Activated CD4-positive, alpha-beta T cell treated with anti-CD3 and anti-CD28 coated beads for 36 hours (primary cell): ENCODE measurements at regions of chr6 and their contacts with region 1.

Region 1: DNA sequence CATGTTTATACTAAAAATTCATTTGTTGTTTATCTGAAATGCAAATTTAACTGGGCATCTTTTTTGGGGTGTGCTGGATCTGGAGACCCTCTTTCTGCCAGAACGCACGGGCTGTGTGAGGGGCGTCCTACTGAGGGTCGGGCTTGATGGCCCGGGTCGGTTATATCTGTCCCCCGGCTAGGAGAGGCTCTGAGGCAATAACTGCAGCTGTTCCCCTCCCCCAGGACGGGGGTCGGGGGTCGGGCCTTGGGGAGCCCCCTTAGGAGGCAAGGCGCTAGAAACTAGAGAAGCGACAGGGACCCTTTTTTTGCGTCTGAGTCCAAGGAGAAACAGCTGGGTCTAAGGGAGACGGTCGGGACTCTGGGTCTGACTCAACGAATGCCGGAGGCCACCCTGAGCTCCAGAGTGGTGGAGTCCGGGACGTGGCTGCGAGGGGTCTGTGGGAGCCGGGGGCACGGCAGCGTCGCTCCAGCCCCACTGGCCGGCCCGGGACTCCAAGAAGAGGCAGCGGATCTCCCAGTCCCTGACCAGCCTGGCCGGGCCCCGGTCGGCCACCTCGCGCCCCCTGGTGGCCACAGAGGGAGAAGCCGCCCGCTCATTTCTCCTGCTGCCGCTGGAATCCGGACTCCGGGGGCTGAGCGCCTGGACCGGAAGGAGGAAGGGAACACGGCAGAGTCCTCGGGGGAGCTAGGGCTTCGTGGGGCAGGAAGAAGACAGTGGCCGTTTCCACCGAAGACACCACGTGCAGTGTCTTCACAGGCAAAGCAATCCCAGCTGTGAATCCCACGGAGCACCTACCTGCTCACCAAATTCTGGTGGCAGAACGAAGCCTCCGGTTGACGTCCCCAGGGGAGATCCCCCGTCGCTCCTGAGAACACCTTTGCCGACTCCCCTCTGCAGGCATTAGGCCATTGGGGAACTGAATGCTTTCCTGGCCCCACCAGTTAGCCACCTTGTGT is 24.0 kb upstream of the SCML4 start:
- DNase-seq: peak; percentile 88
- ATAC-seq: peak; percentile 91
- H3K4me3 Mint-ChIP-seq: peak overlapping the region; percentile 71
- H3K27ac Mint-ChIP-seq: peak overlapping the region; percentile 70
- H3K4me1 Mint-ChIP-seq: peaks cover 21% of the 10 kb centered on the region
- H3K27me3 Mint-ChIP-seq: no peaks in the 10 kb centered on the region

Region 2: GRCh38 chr6:107674995-107675738 is 173.0 kb before region 1 on chr6:
- CTCF ChIA-PET with region 1: interaction called, 54 read pairs
- POLR2A ChIA-PET with region 1: no interaction called
- intact Hi-C with region 1: loop called (anchors 1 kb)
- DNase-seq: peak; percentile 95
- ATAC-seq: peak; percentile 98
- H3K4me3 Mint-ChIP-seq: peak overlapping the region; percentile 33
- H3K27ac Mint-ChIP-seq: peak overlapping the region; percentile 81
- H3K4me1 Mint-ChIP-seq: peaks cover 10% of the 10 kb centered on the region
- H3K27me3 Mint-ChIP-seq: no peaks in the 10 kb centered on the region

Region 3: GRCh38 chr6:107731422-107732319 is 116.5 kb before region 1 on chr6:
- CTCF ChIA-PET with region 1: interaction called, 42 read pairs
- POLR2A ChIA-PET with region 1: no interaction called
- intact Hi-C with region 1: loop called (anchors 1 kb)
- DNase-seq: peak; percentile 46
- ATAC-seq: peak; percentile 20
- H3K4me3 Mint-ChIP-seq: peak overlapping the region; percentile 79
- H3K27ac Mint-ChIP-seq: peak overlapping the region; percentile 91
- H3K4me1 Mint-ChIP-seq: peaks cover 82% of the 10 kb centered on the region
- H3K27me3 Mint-ChIP-seq: no peaks in the 10 kb centered on the region

Region 4: DNA sequence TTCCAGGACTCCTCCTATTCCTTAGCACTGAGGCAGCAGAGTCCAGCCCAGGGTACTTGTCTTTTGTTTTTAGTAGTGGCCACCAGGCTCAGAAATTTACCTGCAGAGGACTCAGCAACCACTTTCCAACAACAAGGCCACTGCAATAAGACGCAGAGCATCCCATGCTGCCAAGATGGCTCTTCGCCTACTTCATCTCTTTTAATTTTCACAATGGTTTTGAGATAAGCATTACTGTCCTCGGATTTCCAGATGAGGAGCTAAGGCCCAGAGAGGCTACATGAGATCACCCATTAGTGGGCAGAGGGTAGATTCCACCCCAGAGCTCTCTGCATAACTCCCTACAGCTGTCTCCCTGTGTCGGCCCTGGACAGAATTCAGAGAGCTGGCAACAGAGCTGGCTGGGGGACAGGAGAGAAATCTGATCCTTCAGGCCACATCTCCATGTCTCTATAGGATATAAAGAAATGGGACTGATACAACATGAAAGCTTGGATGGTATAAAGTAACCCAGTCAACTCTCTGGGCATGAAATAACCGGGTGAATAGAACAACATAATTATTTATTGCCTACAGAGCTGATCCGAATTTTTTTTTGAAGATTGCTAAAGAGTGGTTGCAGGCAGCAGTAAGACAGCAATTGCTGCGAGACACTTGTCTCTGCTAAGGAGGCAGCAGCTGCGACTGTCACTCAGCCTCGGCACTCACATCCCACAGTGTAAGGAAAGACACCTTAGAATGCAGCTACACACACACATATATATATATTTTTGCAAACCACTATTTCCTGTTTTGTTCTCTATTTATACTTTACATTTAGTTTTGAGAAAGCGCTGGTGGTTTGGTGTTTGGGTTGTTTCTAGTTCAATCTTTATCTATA is 61.2 kb before region 1 on chr6:
- CTCF ChIA-PET with region 1: interaction called, 20 read pairs
- POLR2A ChIA-PET with region 1: no interaction called
- intact Hi-C with region 1: no loop called
- DNase-seq: peak; percentile 55
- ATAC-seq: peak; percentile 69
- H3K4me3 Mint-ChIP-seq: peak overlapping the region; percentile 27
- H3K27ac Mint-ChIP-seq: peak overlapping the region; percentile 73
- H3K4me1 Mint-ChIP-seq: peaks cover 84% of the 10 kb centered on the region
- H3K27me3 Mint-ChIP-seq: no peaks in the 10 kb centered on the region

Region 5: GRCh38 chr6:107806691-107807090 is 41.4 kb before region 1 on chr6:
- CTCF ChIA-PET with region 1: interaction called, 13 read pairs
- POLR2A ChIA-PET with region 1: no interaction called
- intact Hi-C with region 1: loop called in 1 of 2 experiments (anchors 2 kb)
- DNase-seq: no peak
- ATAC-seq: no peak
- H3K4me3 Mint-ChIP-seq: no peak overlapping the region
- H3K27ac Mint-ChIP-seq: no peak overlapping the region
- H3K4me1 Mint-ChIP-seq: peaks cover 62% of the 10 kb centered on the region
- H3K27me3 Mint-ChIP-seq: no peaks in the 10 kb centered on the region

Region 6: GRCh38 chr6:107866606-107867301 is 18.6 kb after region 1 on chr6:
- CTCF ChIA-PET with region 1: interaction called, 56 read pairs
- POLR2A ChIA-PET with region 1: interaction called, 6 read pairs
- intact Hi-C with region 1: no loop called
- DNase-seq: peak; percentile 38
- ATAC-seq: peak; percentile 43
- H3K4me3 Mint-ChIP-seq: no peak overlapping the region
- H3K27ac Mint-ChIP-seq: no peak overlapping the region
- H3K4me1 Mint-ChIP-seq: peaks cover 30% of the 10 kb centered on the region
- H3K27me3 Mint-ChIP-seq: no peaks in the 10 kb centered on the region

Region 7: GRCh38 chr6:108549732-108550131 is 701.6 kb after region 1 on chr6:
- CTCF ChIA-PET with region 1: no interaction called
- POLR2A ChIA-PET with region 1: no interaction called
- intact Hi-C with region 1: no loop called
- DNase-seq: no peak
- ATAC-seq: no peak
- H3K4me3 Mint-ChIP-seq: no peak overlapping the region
- H3K27ac Mint-ChIP-seq: no peak overlapping the region
- H3K4me1 Mint-ChIP-seq: no peaks in the 10 kb centered on the region
- H3K27me3 Mint-ChIP-seq: no peaks in the 10 kb centered on the region